Activated CD4-positive, alpha-beta memory T cell treated with anti-CD3 and anti-CD28 coated beads for 36 hours (primary cell): ENCODE measurements at regions of chr12 and their contacts with region 1.

Region 1: DNA sequence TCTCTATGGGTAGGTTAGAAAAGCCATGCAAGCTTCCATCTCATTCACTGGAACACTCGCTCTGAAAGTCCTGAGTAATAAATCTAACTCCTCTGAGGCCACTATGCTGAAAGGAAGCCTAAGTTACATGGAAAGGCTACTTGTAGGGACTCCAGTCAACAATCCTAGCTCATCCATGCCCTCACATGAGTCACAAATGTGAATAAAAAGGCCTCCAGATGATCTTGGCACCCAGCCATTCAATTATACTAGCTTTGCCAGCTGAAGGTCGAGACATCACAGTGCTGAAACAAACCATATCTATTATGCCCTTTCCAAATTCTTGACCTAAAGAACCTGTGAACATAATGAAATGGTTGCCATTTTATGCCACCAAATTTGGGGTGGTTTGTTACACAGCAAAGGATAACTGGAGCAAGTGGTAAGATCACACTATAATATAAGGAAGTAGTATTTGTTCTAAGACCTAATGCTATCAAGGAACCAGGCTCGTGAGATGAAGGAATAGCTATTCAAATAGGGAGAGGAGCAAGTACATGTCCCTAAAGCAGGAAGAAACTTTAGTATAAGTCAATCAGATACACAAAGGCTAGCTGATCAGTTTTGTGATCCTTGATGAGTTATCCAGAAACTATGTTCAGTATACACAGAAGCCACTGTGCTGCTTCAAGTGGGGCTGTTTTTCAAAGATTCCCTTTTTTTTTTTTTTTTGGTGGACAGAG is 142.1 kb downstream of the MED13L start:
- DNase-seq: no peak
- H3K4me3 Mint-ChIP-seq: no peak overlapping the region
- H3K27ac Mint-ChIP-seq: peak overlapping the region; percentile 11
- H3K4me1 Mint-ChIP-seq: peaks cover 74% of the 10 kb centered on the region
- H3K27me3 Mint-ChIP-seq: no peaks in the 10 kb centered on the region

Region 2: GRCh38 chr12:116015525-116015924 is 119.8 kb before region 1 on chr12:
- CTCF ChIA-PET with region 1: no interaction called
- POLR2A ChIA-PET with region 1: no interaction called
- intact Hi-C with region 1: loop called (anchors 5 kb)
- DNase-seq: no peak
- H3K4me3 Mint-ChIP-seq: no peak overlapping the region
- H3K27ac Mint-ChIP-seq: no peak overlapping the region
- H3K4me1 Mint-ChIP-seq: peaks cover 2% of the 10 kb centered on the region
- H3K27me3 Mint-ChIP-seq: no peaks in the 10 kb centered on the region

Region 3: DNA sequence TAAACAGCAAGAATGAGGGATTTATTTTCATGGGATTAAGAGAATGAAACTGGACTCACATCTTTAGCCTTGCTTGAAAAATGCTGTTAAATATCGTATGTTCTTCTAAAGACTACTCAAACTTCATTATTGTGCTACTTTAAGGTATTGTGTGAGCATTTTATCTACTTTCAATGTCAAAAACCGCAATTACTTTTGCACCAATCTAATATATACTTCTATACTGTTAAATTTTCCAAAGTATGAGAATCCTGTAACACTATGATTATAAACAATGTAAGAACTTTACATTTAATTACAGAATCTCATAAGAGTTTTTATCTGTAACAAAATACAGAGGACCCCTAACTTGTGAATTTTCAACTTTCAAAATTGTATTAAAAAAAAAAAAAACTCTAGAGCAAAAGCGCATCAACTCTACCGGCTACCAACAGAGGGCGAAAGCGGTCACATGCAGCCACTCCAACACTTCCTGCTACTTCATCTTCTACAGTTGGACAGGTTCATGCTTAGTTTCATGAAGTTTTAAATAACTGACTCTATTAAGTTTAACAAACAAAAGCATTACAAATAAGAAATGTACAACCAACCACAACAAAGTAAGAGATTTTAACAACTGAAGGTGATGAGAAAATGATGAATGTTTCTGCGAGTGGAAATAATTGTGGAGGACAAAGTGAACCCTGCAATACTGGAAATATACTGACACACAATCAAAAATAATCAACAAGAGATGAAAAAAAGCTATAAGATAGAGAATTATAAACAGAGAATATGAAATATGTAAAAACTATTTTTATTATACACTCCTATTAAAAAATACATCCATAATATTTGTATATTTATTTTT is 68.8 kb before region 1 on chr12:
- CTCF ChIA-PET with region 1: no interaction called
- POLR2A ChIA-PET with region 1: no interaction called
- intact Hi-C with region 1: loop called (anchors 5 kb)
- DNase-seq: peak; percentile 71
- H3K4me3 Mint-ChIP-seq: no peak overlapping the region
- H3K27ac Mint-ChIP-seq: no peak overlapping the region
- H3K4me1 Mint-ChIP-seq: peaks cover 34% of the 10 kb centered on the region
- H3K27me3 Mint-ChIP-seq: no peaks in the 10 kb centered on the region

Region 4: DNA sequence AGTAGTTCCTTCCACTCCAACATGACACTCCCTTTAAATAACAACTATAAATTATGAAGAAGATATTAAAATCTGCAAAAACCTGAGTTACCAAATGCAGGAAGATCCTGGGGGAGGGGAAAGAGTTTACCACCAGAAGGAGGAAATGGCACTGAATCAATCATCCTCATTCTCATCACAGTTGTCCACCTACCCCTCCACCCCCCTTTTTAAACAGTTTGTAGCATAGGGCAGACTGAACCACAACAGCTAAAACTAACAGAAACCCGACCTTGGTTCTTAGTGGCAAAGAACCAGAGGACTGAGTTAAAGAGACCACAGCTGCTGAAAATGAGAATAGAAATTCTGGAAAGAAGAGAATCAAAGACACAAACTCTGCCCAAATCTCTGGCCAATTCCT is 47.4 kb before region 1 on chr12:
- CTCF ChIA-PET with region 1: interaction called, 3 read pairs
- POLR2A ChIA-PET with region 1: no interaction called
- intact Hi-C with region 1: loop called (anchors 2 kb)
- DNase-seq: no peak
- H3K4me3 Mint-ChIP-seq: no peak overlapping the region
- H3K27ac Mint-ChIP-seq: no peak overlapping the region
- H3K4me1 Mint-ChIP-seq: peaks cover 45% of the 10 kb centered on the region
- H3K27me3 Mint-ChIP-seq: no peaks in the 10 kb centered on the region

Region 5: DNA sequence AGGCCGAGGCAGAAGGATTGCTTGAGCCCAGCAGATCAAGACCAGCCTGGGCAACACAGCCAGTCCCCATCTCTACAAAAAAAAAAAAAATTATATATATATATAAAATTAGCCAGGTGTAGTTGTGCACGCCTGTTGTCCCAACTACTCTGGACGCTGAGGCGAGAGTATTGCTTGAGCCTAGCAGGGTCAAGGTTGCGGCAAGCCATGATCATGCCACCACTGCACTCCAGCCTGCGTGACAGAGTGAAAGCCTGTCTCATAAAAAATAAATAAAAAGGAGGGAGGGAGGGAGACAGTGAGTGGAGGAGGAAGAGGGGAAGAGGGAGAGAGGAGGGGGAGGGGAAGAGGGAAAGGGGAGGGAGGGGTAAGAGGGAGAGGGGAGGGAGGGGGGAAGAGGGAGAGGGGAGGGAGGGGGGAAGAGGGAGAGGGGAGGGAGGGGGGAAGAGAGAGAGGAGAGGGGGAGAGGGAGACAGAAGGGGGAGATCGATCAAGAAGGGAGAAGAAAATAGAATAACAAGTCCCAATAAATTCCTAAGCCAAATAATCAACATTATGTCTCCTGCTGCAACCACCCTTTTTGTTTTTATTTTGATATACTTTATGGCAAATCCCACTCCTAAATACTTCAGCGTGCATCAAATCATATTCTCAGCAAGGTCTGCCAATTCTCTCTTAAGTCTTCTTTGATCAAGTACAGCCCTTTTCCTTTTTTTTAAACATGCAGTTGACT is 21.8 kb before region 1 on chr12:
- CTCF ChIA-PET with region 1: no interaction called
- POLR2A ChIA-PET with region 1: no interaction called
- intact Hi-C with region 1: no loop called
- DNase-seq: no peak
- H3K4me3 Mint-ChIP-seq: no peak overlapping the region
- H3K27ac Mint-ChIP-seq: no peak overlapping the region
- H3K4me1 Mint-ChIP-seq: peaks cover 33% of the 10 kb centered on the region
- H3K27me3 Mint-ChIP-seq: no peaks in the 10 kb centered on the region

Region 6: DNA sequence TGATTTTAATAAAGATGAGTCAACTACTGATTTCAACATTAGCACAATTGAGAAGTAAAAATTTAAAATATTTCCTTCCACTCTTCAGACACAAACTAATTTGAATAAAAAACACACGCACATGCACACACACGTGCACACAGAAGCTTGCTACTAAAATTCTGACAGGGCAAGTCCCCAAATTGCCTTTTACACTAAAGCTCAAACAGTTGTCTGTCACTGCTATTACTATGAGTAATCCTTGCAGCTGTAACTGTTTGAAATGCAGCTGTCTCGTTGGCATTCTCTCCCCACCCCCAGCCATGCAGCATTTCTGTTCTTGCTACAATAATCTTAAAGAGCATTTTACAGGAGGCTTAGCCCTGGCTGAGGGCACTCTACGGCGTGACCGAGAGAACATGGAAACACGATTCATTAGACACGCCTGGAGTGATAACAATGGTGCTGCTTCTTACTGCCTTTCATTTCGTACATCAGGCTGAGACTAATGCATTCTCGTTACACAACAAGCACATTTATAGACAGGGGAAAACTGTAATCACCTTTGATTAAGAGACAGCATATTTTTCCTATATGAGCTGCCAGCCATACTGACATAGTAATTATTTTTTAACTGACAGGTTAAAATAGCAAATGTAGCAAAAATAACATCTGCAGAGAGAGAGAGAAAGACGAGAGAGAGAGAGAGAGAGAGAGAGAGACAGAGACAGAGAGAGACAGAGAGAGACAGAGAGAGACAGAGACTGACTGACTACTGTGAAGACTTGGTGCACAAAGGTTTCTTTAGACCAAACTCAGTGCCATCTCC is 11.7 kb before region 1 on chr12:
- CTCF ChIA-PET with region 1: no interaction called
- POLR2A ChIA-PET with region 1: no interaction called
- intact Hi-C with region 1: loop called (anchors 2 kb)
- DNase-seq: peak; percentile 67
- H3K4me3 Mint-ChIP-seq: peak overlapping the region; percentile 49
- H3K27ac Mint-ChIP-seq: peak overlapping the region; percentile 10
- H3K4me1 Mint-ChIP-seq: peaks cover 68% of the 10 kb centered on the region
- H3K27me3 Mint-ChIP-seq: no peaks in the 10 kb centered on the region

Region 7: GRCh38 chr12:116183741-116184141 is 48.4 kb after region 1 on chr12:
- CTCF ChIA-PET with region 1: no interaction called
- POLR2A ChIA-PET with region 1: no interaction called
- intact Hi-C with region 1: no loop called
- DNase-seq: no peak
- H3K4me3 Mint-ChIP-seq: no peak overlapping the region
- H3K27ac Mint-ChIP-seq: no peak overlapping the region
- H3K4me1 Mint-ChIP-seq: peaks cover 69% of the 10 kb centered on the region
- H3K27me3 Mint-ChIP-seq: no peaks in the 10 kb centered on the region